Sigmoid colon (tissue), 7 donors: ENCODE measurements at regions of chr2 and their contacts with region 1.

Region 1: GRCh38 chr2:112749755-112750559 is 14.5 kb downstream of the CKAP2L start:
- DNase-seq: peak; percentile 67
- H3K4me3 ChIP-seq: no peak overlapping the region
- H3K27ac ChIP-seq: no peak overlapping the region
- H3K4me1 ChIP-seq: no peaks in the 10 kb centered on the region
- H3K27me3 ChIP-seq: no peaks in the 10 kb centered on the region
- CTCF ChIP-seq: peak; percentile 53 to 80 (median 62)
- EP300 ChIP-seq: no peak
- POLR2A ChIP-seq: no peak

Region 2: DNA sequence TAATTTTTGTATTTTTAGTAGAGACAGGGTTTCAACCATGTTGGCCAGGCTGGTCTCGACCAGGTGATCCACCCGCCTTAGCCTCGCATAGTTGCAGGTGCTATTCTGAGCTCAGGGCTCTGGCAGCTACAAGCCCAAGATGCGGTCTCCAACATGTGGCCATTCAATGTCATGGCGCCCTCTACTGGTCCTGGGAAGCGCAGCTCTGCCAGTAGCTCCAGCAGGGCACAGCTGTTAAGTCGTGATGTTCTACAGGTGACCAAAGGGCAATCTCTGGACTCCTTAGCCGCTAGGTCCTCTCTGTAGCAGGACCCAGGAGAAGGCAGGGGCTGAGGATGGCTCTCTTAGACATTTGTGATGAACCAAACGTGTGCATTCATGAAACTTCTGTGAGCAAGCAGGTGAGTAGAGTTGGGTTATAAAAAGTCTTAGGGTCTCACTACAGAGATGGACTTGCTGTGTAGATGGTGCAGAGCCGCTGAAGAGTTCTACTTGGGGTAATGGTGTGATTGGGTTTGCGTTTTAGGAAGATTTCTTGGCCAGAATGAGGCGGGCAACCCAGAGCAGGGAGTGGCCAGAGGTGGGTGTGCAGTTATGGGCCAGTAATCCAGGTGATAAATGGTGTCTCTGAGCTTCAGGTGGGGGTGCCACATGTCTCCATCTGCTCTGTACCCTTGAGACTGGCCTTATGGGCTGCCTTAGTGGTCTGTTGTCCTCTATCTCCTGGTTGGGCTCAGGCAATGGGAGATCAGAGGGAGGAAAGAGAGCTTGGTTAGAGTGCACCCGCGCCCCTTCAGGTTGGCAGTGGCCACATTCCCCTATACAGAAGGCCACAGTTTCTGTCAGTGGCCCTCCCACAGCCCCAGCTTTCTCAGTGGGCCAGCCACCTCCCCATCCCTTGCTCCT is 192.0 kb after region 1 on chr2:
- intact Hi-C with region 1: loop called (anchors 1 kb)
- DNase-seq: peak; percentile 78
- H3K4me3 ChIP-seq: no peak overlapping the region
- H3K27ac ChIP-seq: no peak overlapping the region
- H3K4me1 ChIP-seq: peaks cover 0 to 20% (median 11%) of the 10 kb centered on the region in 4 donors
- H3K27me3 ChIP-seq: no peaks in the 10 kb centered on the region
- CTCF ChIP-seq: peak; percentile 41 to 61 (median 50)
- EP300 ChIP-seq: no peak
- POLR2A ChIP-seq: no peak

Region 3: DNA sequence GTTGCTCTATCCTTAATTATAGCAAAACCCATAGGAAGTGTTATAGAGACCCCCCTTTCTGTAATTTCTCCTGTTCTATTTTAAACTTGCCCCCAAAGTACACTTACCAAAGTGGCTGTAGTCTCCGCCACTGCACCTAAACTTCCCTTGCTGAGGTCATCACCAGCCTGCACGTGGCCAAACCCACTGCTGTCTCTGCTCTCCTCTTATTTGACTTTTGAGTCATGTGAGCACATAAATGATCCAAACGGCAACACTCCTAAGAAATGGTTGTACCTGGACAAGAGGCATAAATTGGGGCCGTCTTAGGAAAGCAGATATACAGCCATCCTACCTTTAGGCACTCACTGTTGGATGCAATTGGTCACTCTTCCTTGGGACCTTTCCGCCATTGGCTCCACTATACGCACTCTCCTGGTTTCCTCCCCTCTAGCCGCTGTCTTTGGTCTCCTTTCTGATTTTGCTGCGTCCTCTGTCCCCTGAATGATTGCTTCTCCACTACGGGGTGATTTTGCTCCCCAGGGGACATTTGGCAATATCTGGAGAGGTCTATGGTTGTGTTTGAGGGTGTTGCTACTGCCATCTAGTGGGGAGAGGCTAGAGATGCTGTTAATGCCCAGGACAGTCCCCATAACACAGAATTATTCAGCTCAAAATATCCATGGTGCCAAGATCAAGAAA is 208.6 kb after region 1 on chr2:
- intact Hi-C with region 1: loop called (anchors 5 kb)
- DNase-seq: no peak
- H3K4me3 ChIP-seq: no peak overlapping the region
- H3K27ac ChIP-seq: no peak overlapping the region
- H3K4me1 ChIP-seq: no peaks in the 10 kb centered on the region
- H3K27me3 ChIP-seq: no peaks in the 10 kb centered on the region
- CTCF ChIP-seq: peak in 3 of 4 experiments; percentile 30 to 73 (median 38)
- EP300 ChIP-seq: no peak
- POLR2A ChIP-seq: no peak